Activated CD4-positive, alpha-beta memory T cell treated with anti-CD3 and anti-CD28 coated beads for 36 hours (primary cell): ENCODE measurements at regions of chr6 and their contacts with region 1.

Region 1: GRCh38 chr6:137707590-137708360 is 159.3 kb upstream of the TNFAIP3 start:
- DNase-seq: peak; percentile 90
- H3K4me3 Mint-ChIP-seq: peak overlapping the region; percentile 67
- H3K27ac Mint-ChIP-seq: peak overlapping the region; percentile 88
- H3K4me1 Mint-ChIP-seq: peaks cover 75% of the 10 kb centered on the region
- H3K27me3 Mint-ChIP-seq: no peaks in the 10 kb centered on the region

Region 2: GRCh38 chr6:137680705-137681346 is 26.9 kb before region 1 on chr6:
- CTCF ChIA-PET with region 1: interaction called, 10 read pairs
- POLR2A ChIA-PET with region 1: interaction called, 4 read pairs
- intact Hi-C with region 1: no loop called
- DNase-seq: no peak
- H3K4me3 Mint-ChIP-seq: peak overlapping the region; percentile 18
- H3K27ac Mint-ChIP-seq: peak overlapping the region; percentile 75
- H3K4me1 Mint-ChIP-seq: peaks cover 64% of the 10 kb centered on the region
- H3K27me3 Mint-ChIP-seq: no peaks in the 10 kb centered on the region

Region 3: GRCh38 chr6:137799950-137800568 is 92.3 kb after region 1 on chr6:
- CTCF ChIA-PET with region 1: interaction called, 40 read pairs
- POLR2A ChIA-PET with region 1: interaction called, 3 read pairs
- intact Hi-C with region 1: loop called (anchors 1 kb)
- DNase-seq: peak; percentile 72
- H3K4me3 Mint-ChIP-seq: peak overlapping the region; percentile 4
- H3K27ac Mint-ChIP-seq: peak overlapping the region; percentile 69
- H3K4me1 Mint-ChIP-seq: peaks cover 57% of the 10 kb centered on the region
- H3K27me3 Mint-ChIP-seq: no peaks in the 10 kb centered on the region

Region 4: DNA sequence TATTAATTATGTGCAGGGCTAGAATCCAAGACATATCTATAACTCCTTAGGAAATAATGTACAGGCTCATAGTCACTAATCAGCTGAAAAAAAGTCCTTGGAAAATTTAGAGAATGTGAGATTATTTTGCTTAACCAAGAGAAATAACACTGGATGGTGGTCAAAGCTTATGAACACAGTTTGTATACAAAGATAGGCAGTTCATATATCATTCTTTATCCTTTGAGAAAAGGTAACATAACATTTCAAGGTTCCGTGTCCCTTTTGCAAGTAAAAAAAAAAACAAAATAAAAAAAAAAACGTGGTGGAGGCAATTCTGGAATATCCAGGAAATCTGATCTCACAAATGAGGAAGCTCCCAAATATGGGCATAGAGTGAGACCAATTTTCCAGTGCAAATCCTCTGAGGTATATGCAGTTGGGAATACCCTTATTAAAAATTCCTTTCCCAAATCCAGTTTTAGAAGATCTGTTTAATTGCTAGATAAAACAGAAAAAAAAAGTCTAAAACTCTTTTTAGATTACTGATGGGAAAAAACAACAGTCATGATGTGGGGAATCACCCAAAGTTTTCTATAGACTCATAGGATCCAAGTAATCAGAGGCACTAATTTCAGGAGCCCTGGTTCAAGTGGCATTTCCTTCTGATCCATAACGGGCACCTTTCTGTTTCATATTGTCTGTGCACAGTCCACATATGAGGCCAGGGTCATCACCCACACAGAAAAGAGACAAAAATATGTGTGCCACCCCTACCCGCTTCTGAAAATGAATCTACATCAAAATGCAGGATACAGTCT is 141.6 kb after region 1 on chr6:
- CTCF ChIA-PET with region 1: interaction called, 3 read pairs
- POLR2A ChIA-PET with region 1: no interaction called
- intact Hi-C with region 1: loop called (anchors 1 kb)
- DNase-seq: peak; percentile 78
- H3K4me3 Mint-ChIP-seq: no peak overlapping the region
- H3K27ac Mint-ChIP-seq: peak overlapping the region; percentile 79
- H3K4me1 Mint-ChIP-seq: peaks cover 35% of the 10 kb centered on the region
- H3K27me3 Mint-ChIP-seq: no peaks in the 10 kb centered on the region

Region 5: DNA sequence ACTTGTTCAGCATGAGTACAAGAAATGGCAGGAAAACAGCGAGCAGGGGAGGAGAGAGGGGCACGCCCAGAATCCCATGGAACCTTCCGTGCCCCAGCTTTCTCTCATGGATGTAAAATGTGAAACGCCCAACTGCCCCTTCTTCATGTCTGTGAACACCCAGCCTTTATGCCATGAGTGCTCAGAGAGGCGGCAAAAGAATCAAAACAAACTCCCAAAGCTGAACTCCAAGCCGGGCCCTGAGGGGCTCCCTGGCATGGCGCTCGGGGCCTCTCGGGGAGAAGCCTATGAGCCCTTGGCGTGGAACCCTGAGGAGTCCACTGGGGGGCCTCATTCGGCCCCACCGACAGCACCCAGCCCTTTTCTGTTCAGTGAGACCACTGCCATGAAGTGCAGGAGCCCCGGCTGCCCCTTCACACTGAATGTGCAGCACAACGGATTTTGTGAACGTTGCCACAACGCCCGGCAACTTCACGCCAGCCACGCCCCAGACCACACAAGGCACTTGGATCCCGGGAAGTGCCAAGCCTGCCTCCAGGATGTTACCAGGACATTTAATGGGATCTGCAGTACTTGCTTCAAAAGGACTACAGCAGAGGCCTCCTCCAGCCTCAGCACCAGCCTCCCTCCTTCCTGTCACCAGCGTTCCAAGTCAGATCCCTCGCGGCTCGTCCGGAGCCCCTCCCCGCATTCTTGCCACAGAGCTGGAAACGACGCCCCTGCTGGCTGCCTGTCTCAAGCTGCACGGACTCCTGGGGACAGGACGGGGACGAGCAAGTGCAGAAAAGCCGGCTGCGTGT is 170.9 kb after region 1 on chr6:
- CTCF ChIA-PET with region 1: interaction called, 70 read pairs
- POLR2A ChIA-PET with region 1: interaction called, 43 read pairs
- intact Hi-C with region 1: loop called (anchors 1 kb)
- DNase-seq: no peak
- H3K4me3 Mint-ChIP-seq: peak overlapping the region; percentile 51
- H3K27ac Mint-ChIP-seq: peak overlapping the region; percentile 84
- H3K4me1 Mint-ChIP-seq: peaks cover 89% of the 10 kb centered on the region
- H3K27me3 Mint-ChIP-seq: no peaks in the 10 kb centered on the region

Region 6: DNA sequence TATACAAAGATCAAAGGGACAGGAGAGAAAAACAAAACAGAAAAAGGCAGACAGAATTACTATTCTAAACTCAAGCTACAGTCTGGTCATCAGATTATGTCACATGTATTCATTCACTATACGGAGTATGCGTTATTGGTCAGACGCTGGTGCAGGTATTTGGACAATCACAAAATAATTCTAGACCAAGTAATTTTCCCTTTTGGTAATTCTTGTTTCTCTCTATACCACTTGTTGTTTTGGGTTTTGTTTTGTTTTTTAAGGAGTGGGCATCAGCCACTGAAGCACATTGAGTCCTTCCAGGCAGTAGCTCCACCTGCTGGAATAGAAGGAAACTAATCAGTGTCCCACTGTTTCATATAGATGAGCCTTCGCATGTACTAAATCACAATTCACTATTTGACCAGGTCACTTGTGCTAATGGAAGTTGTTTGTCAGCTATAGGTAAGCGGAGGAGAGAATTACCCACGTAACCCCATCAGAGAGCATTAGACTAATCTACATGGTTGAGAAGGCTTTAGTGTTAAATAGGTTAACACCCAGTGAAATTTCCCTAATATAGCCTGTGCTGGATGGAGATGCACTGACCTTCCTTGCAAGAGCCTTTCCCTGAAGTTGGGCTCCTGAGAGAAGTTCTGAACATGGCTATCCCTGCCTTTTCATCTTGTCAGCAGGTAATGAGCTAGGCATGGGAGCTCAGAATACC is 237.2 kb after region 1 on chr6:
- CTCF ChIA-PET with region 1: interaction called, 35 read pairs
- POLR2A ChIA-PET with region 1: interaction called, 3 read pairs
- intact Hi-C with region 1: loop called (anchors 1 kb)
- DNase-seq: peak; percentile 24
- H3K4me3 Mint-ChIP-seq: no peak overlapping the region
- H3K27ac Mint-ChIP-seq: peak overlapping the region; percentile 47
- H3K4me1 Mint-ChIP-seq: peaks cover 40% of the 10 kb centered on the region
- H3K27me3 Mint-ChIP-seq: no peaks in the 10 kb centered on the region

Region 7: GRCh38 chr6:138007014-138007472 is 299.3 kb after region 1 on chr6:
- CTCF ChIA-PET with region 1: interaction called, 58 read pairs
- POLR2A ChIA-PET with region 1: no interaction called
- intact Hi-C with region 1: loop called (anchors 1 kb)
- DNase-seq: peak; percentile 46
- H3K4me3 Mint-ChIP-seq: no peak overlapping the region
- H3K27ac Mint-ChIP-seq: no peak overlapping the region
- H3K4me1 Mint-ChIP-seq: peaks cover 11% of the 10 kb centered on the region
- H3K27me3 Mint-ChIP-seq: peaks cover 3% of the 10 kb centered on the region

Region 8: GRCh38 chr6:139250296-139251044 is 1542.7 kb after region 1 on chr6:
- CTCF ChIA-PET with region 1: no interaction called
- POLR2A ChIA-PET with region 1: no interaction called
- intact Hi-C with region 1: no loop called
- DNase-seq: peak; percentile 75
- H3K4me3 Mint-ChIP-seq: no peak overlapping the region
- H3K27ac Mint-ChIP-seq: peak overlapping the region; percentile 73
- H3K4me1 Mint-ChIP-seq: peaks cover 49% of the 10 kb centered on the region
- H3K27me3 Mint-ChIP-seq: no peaks in the 10 kb centered on the region